ENCODE measurements at regions of chr5 and their contacts with region 1.

Region 1: GRCh38 chr5:95646554-95647431 is at the start of gene RFESD:
- DNase-seq: peak; percentile 90 to 95 (median 93)
- H3K4me3 ChIP-seq: peak within 1 kb of the TSS; percentile 85
- H3K4me3 Mint-ChIP-seq: peak within 1 kb of the TSS; percentile 85 to 94 (median 89)
- H3K27ac ChIP-seq: peak within 1 kb of the TSS; percentile 86
- H3K27ac Mint-ChIP-seq: peak within 1 kb of the TSS; percentile 84 to 96 (median 91)
- H3K4me1 ChIP-seq: peaks cover 21% of the 10 kb centered on the region
- H3K4me1 Mint-ChIP-seq: peaks cover 20 to 33% (median 32%) of the 10 kb centered on the region in 3 donors
- H3K27me3 ChIP-seq: no peaks in the 10 kb centered on the region
- H3K27me3 Mint-ChIP-seq: no peaks in the 10 kb centered on the region
- total RNA-seq, gene RFESD: 4.2 to 5.4 TPM

Region 2: GRCh38 chr5:95554647-95555548 is 91.9 kb before region 1 on chr5 and contains the starts of genes ARSK and SKIC3:
- CTCF ChIA-PET with region 1: interaction called, 17 read pairs
- POLR2A ChIA-PET with region 1: interaction called, 5 read pairs
- DNase-seq: peak; percentile 79 to 97 (median 95)
- H3K4me3 ChIP-seq: peak within 1 kb of the TSS; percentile 80
- H3K4me3 Mint-ChIP-seq: peak within 1 kb of the TSS; percentile 92 to 99 (median 95)
- H3K27ac ChIP-seq: peak within 1 kb of the TSS; percentile 82
- H3K27ac Mint-ChIP-seq: peak within 1 kb of the TSS; percentile 91 to 99 (median 96)
- H3K4me1 ChIP-seq: peaks cover 32% of the 10 kb centered on the region
- H3K4me1 Mint-ChIP-seq: peaks cover 49 to 56% (median 51%) of the 10 kb centered on the region in 3 donors
- H3K27me3 ChIP-seq: no peaks in the 10 kb centered on the region
- H3K27me3 Mint-ChIP-seq: no peaks in the 10 kb centered on the region
- total RNA-seq, gene ARSK: 4.3 to 5.7 TPM
- total RNA-seq, gene SKIC3: 65.2 to 65.7 TPM

Region 3: DNA sequence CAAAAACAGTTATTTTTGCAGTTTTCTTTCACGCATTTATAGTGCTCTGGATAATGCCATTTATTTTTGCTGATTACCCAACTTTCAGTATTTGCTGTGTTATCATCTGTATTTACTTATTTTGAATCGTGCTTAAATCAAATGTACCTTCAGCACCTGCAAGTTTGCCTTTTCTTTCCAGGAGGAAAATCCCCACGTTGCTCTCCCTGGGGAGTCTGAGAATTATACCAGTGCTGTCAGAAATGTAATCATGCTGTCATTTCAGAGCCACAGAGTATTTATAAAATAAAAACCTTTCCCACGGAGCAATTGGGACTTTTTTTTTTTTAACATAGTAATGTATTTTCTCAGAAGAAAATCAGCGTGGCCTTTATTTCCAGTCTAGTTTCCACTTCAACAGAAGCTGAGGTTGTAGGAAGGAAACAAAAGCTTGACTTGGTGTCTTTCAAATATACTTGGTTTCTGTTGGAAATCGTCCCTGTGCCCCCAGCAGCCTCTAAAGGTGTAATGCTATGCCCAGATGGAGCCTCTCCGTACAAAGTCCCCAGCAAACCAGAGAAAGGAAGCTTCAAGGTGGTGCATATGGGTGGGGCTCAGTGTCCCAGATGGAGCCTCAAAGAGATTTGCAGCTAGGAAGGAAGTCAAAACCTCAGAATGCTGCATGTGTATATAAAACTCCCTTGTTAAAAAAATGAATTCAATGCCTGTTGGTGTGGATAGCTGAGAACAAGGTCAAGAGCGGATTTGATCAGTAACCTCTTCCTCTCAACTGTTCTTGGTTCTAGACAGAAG is 24.8 kb before region 1 on chr5:
- CTCF ChIA-PET with region 1: interaction called, 14 read pairs
- POLR2A ChIA-PET with region 1: interaction called, 4 read pairs
- DNase-seq: peak in 3 of 5 donors; percentile 30 to 60 (median 59)
- H3K4me3 ChIP-seq: peak overlapping the region; percentile 55
- H3K4me3 Mint-ChIP-seq: peak overlapping the region; percentile 84 to 93 (median 88)
- H3K27ac ChIP-seq: peak overlapping the region; percentile 19
- H3K27ac Mint-ChIP-seq: peak overlapping the region; percentile 35 to 97 (median 82)
- H3K4me1 ChIP-seq: peaks cover 35% of the 10 kb centered on the region
- H3K4me1 Mint-ChIP-seq: peaks cover 39 to 60% (median 50%) of the 10 kb centered on the region in 3 donors
- H3K27me3 ChIP-seq: no peaks in the 10 kb centered on the region
- H3K27me3 Mint-ChIP-seq: peaks cover 2 to 4% of the 10 kb centered on the region in 2 donors

Region 4: GRCh38 chr5:95631991-95632675 is 14.7 kb before region 1 on chr5:
- CTCF ChIA-PET with region 1: interaction called, 12 read pairs
- POLR2A ChIA-PET with region 1: interaction called, 6 read pairs
- DNase-seq: peak; percentile 24 to 75 (median 64)
- H3K4me3 ChIP-seq: peak overlapping the region; percentile 13
- H3K4me3 Mint-ChIP-seq: peak overlapping the region in 3 of 7 donors; percentile 26 to 32 (median 29)
- H3K27ac ChIP-seq: no peak overlapping the region
- H3K27ac Mint-ChIP-seq: peak overlapping the region; percentile 2 to 93 (median 84)
- H3K4me1 ChIP-seq: peaks cover 15% of the 10 kb centered on the region
- H3K4me1 Mint-ChIP-seq: peaks cover 13 to 18% (median 13%) of the 10 kb centered on the region in 3 donors
- H3K27me3 ChIP-seq: no peaks in the 10 kb centered on the region
- H3K27me3 Mint-ChIP-seq: peaks cover 2 to 9% of the 10 kb centered on the region in 2 donors

Region 5: DNA sequence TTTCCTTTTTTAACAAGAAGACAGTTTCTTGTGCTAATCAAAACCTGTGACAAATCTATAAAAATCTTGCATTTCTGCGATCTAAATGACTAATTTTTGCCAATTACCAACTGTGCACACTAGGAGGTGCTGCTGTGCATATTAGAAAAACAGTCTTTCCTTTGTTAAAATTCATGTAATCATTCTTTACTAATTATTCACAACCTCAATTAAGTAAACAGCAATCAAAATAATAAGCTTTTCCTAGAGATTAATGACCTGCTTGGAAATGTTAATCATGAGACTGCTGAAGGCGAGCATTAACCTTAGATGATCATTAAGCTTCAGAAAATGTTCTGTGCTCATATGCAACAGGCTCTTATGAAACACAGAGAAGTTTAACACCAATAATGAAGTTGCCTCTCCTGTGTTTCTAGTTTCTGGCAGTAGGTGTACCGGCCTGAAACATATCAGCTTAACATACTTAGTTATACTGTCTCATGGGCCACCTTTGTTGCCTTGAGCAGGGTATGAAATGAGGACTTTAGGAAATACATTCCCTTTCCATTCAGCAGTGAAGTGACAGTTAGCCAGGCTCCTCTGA is 17.5 kb after region 1 on chr5:
- CTCF ChIA-PET with region 1: interaction called, 15 read pairs
- POLR2A ChIA-PET with region 1: no interaction called
- DNase-seq: peak in 3 of 5 donors; percentile 7 to 17 (median 8)
- H3K4me3 ChIP-seq: no peak overlapping the region
- H3K4me3 Mint-ChIP-seq: no peak overlapping the region
- H3K27ac ChIP-seq: no peak overlapping the region
- H3K27ac Mint-ChIP-seq: no peak overlapping the region
- H3K4me1 ChIP-seq: peaks cover 6% of the 10 kb centered on the region
- H3K4me1 Mint-ChIP-seq: peaks cover 3 to 4% (median 3%) of the 10 kb centered on the region in 3 donors
- H3K27me3 ChIP-seq: no peaks in the 10 kb centered on the region
- H3K27me3 Mint-ChIP-seq: no peaks in the 10 kb centered on the region

Region 6: DNA sequence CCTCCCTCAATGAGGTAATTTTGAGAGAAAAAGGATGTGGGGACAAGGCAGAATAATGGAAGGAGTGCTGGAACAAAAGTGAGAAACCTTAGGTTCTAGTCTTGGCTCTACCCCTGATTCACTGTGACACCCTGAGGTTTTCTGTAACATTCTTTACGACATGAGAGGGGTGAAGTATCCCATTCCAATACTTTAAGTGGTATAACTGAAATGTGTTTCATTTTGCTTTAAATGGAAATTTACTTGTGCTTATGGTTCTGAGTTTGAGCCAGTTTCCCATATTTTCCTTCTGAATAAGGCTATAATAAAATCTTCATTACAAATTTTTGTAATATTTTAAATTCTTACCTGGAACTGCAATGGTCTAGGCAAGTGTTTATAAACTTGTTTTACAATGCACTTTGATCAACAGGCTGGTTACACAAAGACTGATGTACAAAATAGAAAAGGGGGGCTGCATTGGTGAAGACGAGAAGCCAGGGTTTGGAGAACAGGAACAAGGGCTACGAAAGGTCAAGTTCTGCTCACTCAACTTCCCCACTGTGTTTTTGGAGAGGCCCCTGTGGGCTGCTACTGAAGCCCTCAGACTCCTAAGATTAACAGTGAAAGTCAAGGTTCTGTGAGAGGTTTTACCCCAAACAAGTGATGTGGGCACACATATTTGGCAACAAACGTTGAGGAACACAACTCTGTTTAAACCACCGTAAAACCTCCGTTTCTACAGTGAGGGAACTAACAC is 486.7 kb after region 1 on chr5:
- CTCF ChIA-PET with region 1: no interaction called
- POLR2A ChIA-PET with region 1: no interaction called
- DNase-seq: no peak
- H3K4me3 ChIP-seq: no peak overlapping the region
- H3K4me3 Mint-ChIP-seq: no peak overlapping the region
- H3K27ac ChIP-seq: no peak overlapping the region
- H3K27ac Mint-ChIP-seq: no peak overlapping the region
- H3K4me1 ChIP-seq: no peaks in the 10 kb centered on the region
- H3K4me1 Mint-ChIP-seq: no peaks in the 10 kb centered on the region
- H3K27me3 ChIP-seq: no peaks in the 10 kb centered on the region
- H3K27me3 Mint-ChIP-seq: peaks cover 2 to 5% of the 10 kb centered on the region in 2 donors